MCF 10A (cell line): ENCODE measurements at regions of chr6 and their contacts with region 1.

Region 1: GRCh38 chr6:39698789-39699576 is 26.2 kb downstream of the KIF6 start:
- DNase-seq: no peak
- H3K4me3 Mint-ChIP-seq: no peak overlapping the region
- H3K27ac Mint-ChIP-seq: no peak overlapping the region
- H3K4me1 Mint-ChIP-seq: peaks cover 7% of the 10 kb centered on the region
- H3K27me3 Mint-ChIP-seq: no peaks in the 10 kb centered on the region
- CTCF ChIP-seq: no peak

Region 2: DNA sequence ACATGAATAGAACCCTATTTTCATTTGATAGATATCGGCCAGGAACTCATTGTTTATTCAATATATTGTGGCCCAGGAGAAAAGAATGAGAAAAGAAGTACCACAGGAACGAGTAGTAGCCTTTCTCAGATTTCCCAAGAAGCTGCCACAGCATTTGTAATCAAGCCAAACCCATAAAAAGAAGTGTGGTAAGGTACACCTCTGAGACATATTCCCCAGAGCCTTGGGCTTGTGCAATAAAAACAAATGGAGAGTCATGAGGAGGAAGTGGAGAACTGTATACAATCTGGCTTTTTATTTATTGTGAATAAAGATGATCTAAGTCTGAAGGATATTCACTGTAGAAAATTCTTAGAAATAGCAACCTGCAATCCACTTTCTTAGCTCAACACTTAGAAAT is 10.5 kb before region 1 on chr6:
- CTCF ChIA-PET with region 1: no interaction called
- POLR2A ChIA-PET with region 1: interaction called, 11 read pairs
- intact Hi-C with region 1: no loop called
- DNase-seq: peak; percentile 92
- H3K4me3 Mint-ChIP-seq: no peak overlapping the region
- H3K27ac Mint-ChIP-seq: peak overlapping the region; percentile 18
- H3K4me1 Mint-ChIP-seq: peaks cover 17% of the 10 kb centered on the region
- H3K27me3 Mint-ChIP-seq: no peaks in the 10 kb centered on the region
- CTCF ChIP-seq: no peak